ENCODE measurements at regions of chr6 and their contacts with region 1.

Region 1: DNA sequence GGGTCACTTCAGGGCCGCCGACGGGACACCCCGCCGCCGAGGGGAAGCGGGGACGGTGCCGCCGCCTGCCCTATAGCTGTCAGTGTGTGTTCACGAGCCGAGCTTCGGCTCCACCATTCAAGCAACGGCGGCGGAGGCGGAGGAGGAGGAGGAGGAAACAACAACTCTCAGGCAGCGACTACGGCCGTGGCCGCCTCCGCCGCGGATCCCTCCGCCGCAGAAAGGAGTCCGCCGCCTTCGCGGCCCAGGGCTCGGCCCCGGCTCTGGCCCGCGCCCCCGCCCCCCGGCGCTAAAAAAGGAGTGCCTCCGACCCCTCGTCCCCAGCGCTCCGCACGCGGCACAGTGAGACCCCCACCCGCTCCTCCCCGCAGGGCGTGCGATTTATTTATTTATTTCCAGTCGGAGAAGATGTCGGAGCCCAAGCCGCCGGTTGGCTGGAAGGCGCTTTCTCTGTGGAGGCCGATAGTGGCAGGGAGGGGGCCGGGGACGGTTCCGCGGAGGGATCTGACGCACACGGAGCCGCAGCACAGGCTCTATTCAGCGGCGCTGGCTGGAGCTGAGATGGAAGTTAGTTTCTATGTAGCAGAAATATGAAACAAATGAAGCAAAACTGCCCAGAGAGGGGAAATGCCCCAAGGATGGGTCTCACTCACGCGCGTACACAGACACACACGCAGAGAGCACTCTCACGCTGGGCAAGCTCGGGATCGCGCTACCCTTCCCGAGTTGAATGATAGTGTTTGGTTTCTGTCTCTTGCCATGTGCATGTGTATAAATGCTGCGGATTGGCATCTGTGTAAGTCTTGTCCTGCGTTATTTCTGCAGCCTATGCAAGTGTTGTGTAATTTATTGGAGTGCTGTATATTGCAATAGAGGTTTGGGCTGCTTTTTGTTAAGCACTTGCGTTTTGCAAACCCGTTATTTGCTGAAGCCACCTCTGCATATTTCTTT is at the start of gene PHIP:
- DNase-seq: peak; percentile 98
- H3K4me3 ChIP-seq: peak within 1 kb of the TSS; percentile 89 to 98 (median 96)
- H3K27ac ChIP-seq: peak within 1 kb of the TSS; percentile 99
- H3K4me1 ChIP-seq: peaks cover 0 to 45% (median 38%) of the 10 kb centered on the region in 4 donors
- H3K27me3 ChIP-seq: no peaks in the 10 kb centered on the region
- CTCF ChIP-seq: no peak
- EP300 ChIP-seq: no peak
- POLR2A ChIP-seq: peak; percentile 45 to 56
- total RNA-seq, gene PHIP: 31.6 to 41.7 (median 37.1) TPM

Region 2: DNA sequence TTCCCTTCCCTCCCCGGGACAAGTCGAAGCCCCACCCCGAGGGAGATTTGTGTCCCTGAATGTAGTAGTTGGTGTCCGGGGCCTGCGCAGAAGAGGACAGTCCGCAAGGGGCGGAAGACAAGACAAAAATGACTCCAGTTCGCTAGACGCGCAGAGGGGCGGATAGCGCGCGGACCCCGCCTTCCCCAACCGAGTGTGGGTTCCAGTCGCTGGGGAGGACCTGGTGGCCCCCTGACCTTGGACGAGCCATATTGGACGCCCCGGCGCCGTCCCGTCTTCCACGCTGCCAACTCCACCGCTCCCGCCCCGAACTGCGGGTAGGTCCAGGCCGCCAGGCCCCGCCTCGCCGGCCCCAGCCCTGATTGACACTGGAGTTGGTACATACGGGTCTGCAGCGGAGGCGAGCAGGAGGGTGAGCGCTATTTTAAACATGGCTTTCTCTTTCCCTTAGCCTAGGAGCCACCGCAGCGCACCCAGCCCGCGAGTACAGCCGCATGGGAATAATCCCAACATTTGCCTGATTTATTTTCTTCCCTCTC is 155.3 kb after region 1 on chr6:
- intact Hi-C with region 1: loop called (anchors 1 kb)
- DNase-seq: peak; percentile 95
- H3K4me3 ChIP-seq: peak overlapping the region; percentile 64 to 80 (median 74)
- H3K27ac ChIP-seq: peak overlapping the region; percentile 90 to 96 (median 92)
- H3K4me1 ChIP-seq: peaks cover 0 to 18% (median 17%) of the 10 kb centered on the region in 4 donors
- H3K27me3 ChIP-seq: no peaks in the 10 kb centered on the region
- CTCF ChIP-seq: peak; percentile 36 to 54 (median 40)
- EP300 ChIP-seq: no peak
- POLR2A ChIP-seq: peak; percentile 4 to 22

Region 3: GRCh38 chr6:79450984-79451383 is 372.6 kb after region 1 on chr6:
- intact Hi-C with region 1: no loop called
- DNase-seq: no peak
- H3K4me3 ChIP-seq: no peak overlapping the region
- H3K27ac ChIP-seq: no peak overlapping the region
- H3K4me1 ChIP-seq: no peaks in the 10 kb centered on the region
- H3K27me3 ChIP-seq: no peaks in the 10 kb centered on the region
- CTCF ChIP-seq: no peak
- EP300 ChIP-seq: no peak
- POLR2A ChIP-seq: no peak

Region 4: DNA sequence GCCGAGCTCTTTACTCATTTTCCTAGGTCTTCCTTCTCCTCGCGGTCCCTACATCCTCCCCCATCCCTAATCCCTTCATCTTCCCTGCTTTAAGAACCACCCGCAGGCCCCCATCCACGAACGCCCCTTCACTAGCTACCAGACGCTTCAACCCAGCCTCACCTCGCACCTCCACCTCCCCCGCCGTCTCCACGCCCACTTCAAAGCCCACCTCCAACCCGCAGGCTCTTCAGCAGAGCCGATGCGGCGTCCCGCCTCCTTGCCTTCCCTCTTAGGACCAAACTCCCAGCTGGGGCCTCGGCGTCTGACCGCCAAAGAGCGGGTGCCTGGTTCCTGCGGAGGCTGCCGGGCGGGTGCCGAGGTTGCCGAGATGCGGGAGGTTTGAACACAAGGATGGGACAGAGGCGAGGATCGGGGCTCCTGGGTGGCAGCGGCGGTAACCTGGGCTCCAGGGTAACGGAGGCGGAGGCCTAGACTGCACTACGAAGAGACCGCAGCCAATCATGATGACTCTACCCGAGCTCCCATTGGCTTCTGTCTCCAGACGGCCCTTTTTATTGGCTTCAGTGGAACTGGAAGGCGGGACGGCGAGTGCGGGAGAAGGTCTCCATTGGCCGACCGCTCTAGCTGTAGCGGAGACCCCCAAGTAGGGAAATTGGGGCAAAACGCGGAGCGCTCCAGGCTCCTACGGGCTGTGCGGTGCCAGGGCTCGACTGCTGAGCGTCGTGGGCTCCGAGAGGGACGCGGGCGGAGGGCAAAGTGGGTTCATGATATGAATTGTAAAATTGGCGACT is 458.8 kb after region 1 on chr6 and contains the start of gene LCA5:
- intact Hi-C with region 1: loop called (anchors 5 kb)
- DNase-seq: peak; percentile 97
- H3K4me3 ChIP-seq: peak within 1 kb of the TSS; percentile 61 to 79 (median 72)
- H3K27ac ChIP-seq: peak within 1 kb of the TSS; percentile 86 to 95 (median 90)
- H3K4me1 ChIP-seq: peaks cover 0 to 19% (median 0%) of the 10 kb centered on the region in 4 donors
- H3K27me3 ChIP-seq: no peaks in the 10 kb centered on the region
- CTCF ChIP-seq: no peak
- EP300 ChIP-seq: no peak
- POLR2A ChIP-seq: peak in 1 of 2 donors; percentile 18
- total RNA-seq, gene LCA5: 5.0 to 10.7 (median 8.8) TPM

Region 5: GRCh38 chr6:79630883-79631692 is 552.7 kb after region 1 on chr6 and contains the start of gene SH3BGRL2:
- intact Hi-C with region 1: loop called (anchors 5 kb)
- DNase-seq: peak; percentile 83
- H3K4me3 ChIP-seq: peak within 1 kb of the TSS; percentile 68 to 83 (median 76)
- H3K27ac ChIP-seq: peak within 1 kb of the TSS; percentile 64 to 84 (median 70)
- H3K4me1 ChIP-seq: peaks cover 0 to 13% (median 5%) of the 10 kb centered on the region in 4 donors
- H3K27me3 ChIP-seq: no peaks in the 10 kb centered on the region
- CTCF ChIP-seq: no peak
- EP300 ChIP-seq: no peak
- POLR2A ChIP-seq: peak in 1 of 2 donors; percentile 34
- total RNA-seq, gene SH3BGRL2: 16.0 to 30.6 (median 29.4) TPM

Region 6: GRCh38 chr6:79672631-79673111 is 594.3 kb after region 1 on chr6:
- intact Hi-C with region 1: loop called (anchors 10 kb)
- DNase-seq: no peak
- H3K4me3 ChIP-seq: no peak overlapping the region
- H3K27ac ChIP-seq: peak overlapping the region in 2 of 4 donors; percentile 9 to 51
- H3K4me1 ChIP-seq: peaks cover 0 to 18% (median 18%) of the 10 kb centered on the region in 4 donors
- H3K27me3 ChIP-seq: no peaks in the 10 kb centered on the region
- CTCF ChIP-seq: peak in 3 of 4 experiments; percentile 13 to 19 (median 14)
- EP300 ChIP-seq: no peak
- POLR2A ChIP-seq: no peak

Measured in sigmoid colon (tissue), 7 donors.